Activated naive CD8-positive, alpha-beta T cell treated with anti-CD3 and anti-CD28 coated beads, Interleukin-2, amount 10 ng/mL, durations not matched to agents 7 days and 5 days (primary cell): ENCODE measurements at regions of chrX and their contacts with region 1.

Region 1: DNA sequence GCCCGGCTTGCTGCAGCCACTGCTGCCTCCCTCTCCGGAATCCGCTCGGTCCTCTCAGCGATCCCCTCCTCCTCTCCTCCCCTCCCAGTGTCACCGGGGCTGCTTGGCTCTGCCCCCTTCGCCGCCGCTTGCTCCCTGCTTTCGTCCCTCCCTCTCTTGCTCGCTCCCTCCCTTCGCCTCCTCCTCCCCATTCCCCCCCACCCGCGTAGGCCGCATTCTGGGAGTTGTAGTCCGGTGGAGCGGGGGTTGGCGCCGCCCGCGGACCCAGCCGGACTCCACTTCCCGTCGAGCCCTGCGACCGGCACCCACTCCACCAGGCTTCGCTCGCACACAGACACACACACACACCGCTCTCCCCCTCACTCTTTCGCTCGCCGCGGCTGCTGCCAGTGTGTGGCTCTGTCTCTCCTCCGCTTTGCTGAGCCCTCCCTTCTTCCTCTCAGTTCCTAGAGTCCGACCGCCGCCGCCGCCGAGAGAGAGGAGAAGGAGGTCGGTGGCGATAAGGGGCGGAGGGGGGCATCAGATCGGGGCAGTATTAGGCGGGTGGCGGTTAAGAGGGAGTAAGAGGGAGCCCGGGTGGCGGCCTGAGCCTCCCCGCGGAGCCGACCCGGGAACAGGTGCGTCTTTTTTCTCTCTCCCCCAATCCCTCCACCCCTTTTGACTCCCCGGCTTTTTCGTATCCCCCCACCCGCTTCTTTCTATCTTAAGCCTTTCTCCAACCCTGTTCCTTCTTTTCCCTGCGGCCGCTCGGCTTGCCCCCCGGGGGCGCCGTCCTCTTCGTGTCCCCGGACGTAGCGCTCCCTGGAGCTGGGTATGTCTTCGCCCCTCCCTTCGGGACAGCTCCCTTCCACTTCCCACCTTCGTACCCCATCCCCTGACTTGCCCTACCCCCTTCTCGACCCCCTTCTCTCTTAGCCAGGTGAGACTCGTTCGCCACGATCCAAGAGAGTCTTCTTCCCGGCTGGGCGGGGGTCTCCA is at the start of gene BCORL1:
- DNase-seq: peak; percentile 81
- ATAC-seq: peak; percentile 88
- H3K4me3 Mint-ChIP-seq: no peak within 1 kb of the TSS
- H3K27ac Mint-ChIP-seq: peak within 1 kb of the TSS; percentile 85
- H3K4me1 Mint-ChIP-seq: peaks cover 23% of the 10 kb centered on the region
- H3K27me3 Mint-ChIP-seq: peaks cover 4% of the 10 kb centered on the region
- total RNA-seq, gene BCORL1: 14.3 to 15.4 TPM

Region 2: GRCh38 chrX:129905787-129906580 is 76.6 kb before region 1 on chrX and contains the start of gene UTP14A:
- POLR2A ChIA-PET with region 1: no interaction called
- DNase-seq: peak; percentile 77
- ATAC-seq: peak; percentile 96
- H3K4me3 Mint-ChIP-seq: peak within 1 kb of the TSS; percentile 84
- H3K27ac Mint-ChIP-seq: peak within 1 kb of the TSS; percentile 85
- H3K4me1 Mint-ChIP-seq: peaks cover 9% of the 10 kb centered on the region
- H3K27me3 Mint-ChIP-seq: no peaks in the 10 kb centered on the region
- total RNA-seq, gene UTP14A: 20.8 to 21.0 TPM

Region 3: GRCh38 chrX:129961180-129962083 is 21.1 kb before region 1 on chrX:
- POLR2A ChIA-PET with region 1: interaction called, 12 read pairs
- DNase-seq: peak; percentile 77
- ATAC-seq: peak; percentile 91
- H3K4me3 Mint-ChIP-seq: peak overlapping the region; percentile 79
- H3K27ac Mint-ChIP-seq: peak overlapping the region; percentile 94
- H3K4me1 Mint-ChIP-seq: peaks cover 21% of the 10 kb centered on the region
- H3K27me3 Mint-ChIP-seq: peaks cover 2% of the 10 kb centered on the region

Region 4: GRCh38 chrX:129996120-129996519 is 13.6 kb after region 1 on chrX:
- POLR2A ChIA-PET with region 1: interaction called, 10 read pairs
- DNase-seq: no peak
- ATAC-seq: no peak
- H3K4me3 Mint-ChIP-seq: no peak overlapping the region
- H3K27ac Mint-ChIP-seq: no peak overlapping the region
- H3K4me1 Mint-ChIP-seq: peaks cover 5% of the 10 kb centered on the region
- H3K27me3 Mint-ChIP-seq: no peaks in the 10 kb centered on the region